IMR-90 (cell line): ENCODE measurements at regions of chr2 and their contacts with region 1.

Region 1: DNA sequence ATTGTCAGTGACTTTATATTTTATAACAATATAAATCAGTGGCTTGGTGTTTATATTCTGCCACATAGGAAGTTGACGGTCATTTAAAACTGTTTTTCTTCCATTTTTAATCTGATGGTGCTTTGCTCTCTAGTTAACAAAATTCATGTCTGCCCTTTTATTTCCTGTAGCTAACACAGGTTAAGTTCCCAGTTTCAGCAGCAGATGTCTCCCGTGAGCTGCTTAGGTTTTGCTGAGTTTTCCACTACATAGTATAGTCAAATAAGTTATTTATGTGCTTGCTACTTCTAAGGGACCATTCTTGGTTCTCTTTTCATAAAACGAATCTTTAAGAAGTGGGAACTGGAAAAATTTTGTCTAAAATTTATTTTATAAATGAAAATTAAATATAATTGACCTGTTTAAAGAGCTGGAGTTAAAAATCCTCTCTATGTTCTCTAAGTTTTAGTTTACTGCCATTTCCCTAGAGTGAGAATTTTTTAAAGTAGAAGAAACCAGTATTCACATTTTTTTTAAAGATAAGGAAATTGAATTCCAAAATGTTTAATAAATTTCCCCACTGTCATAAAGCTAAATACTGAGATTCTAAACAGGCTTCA is 20.6 kb downstream of the HTR2B start:
- DNase-seq: peak; percentile 75
- ATAC-seq: peak; percentile 94
- H3K4me3 ChIP-seq: no peak overlapping the region
- H3K27ac ChIP-seq: peak overlapping the region; percentile 15; the same call in 1 of the 2 replicates
- H3K4me1 ChIP-seq: peaks cover 7% of the 10 kb centered on the region
- H3K27me3 ChIP-seq: no peaks in the 10 kb centered on the region
- CTCF ChIP-seq: peak; percentile 89
- POLR2A ChIP-seq: no peak
- RAD21 ChIP-seq: peak; percentile 90

Region 2: GRCh38 chr2:231191896-231192872 is 88.0 kb after region 1 on chr2:
- CTCF ChIA-PET with region 1: interaction called, 25 read pairs
- POLR2A ChIA-PET with region 1: interaction called, 3 read pairs
- dilution Hi-C with region 1: no loop called
- in situ Hi-C with region 1: no loop called
- intact Hi-C with region 1: loop called (anchors 1 kb)
- DNase-seq: peak; percentile 83
- ATAC-seq: peak; percentile 98
- H3K4me3 ChIP-seq: no peak overlapping the region
- H3K27ac ChIP-seq: peak overlapping the region; percentile 71; the same call in 1 of the 2 replicates
- H3K4me1 ChIP-seq: peaks cover 14% of the 10 kb centered on the region; the same call in 1 of the 2 replicates
- H3K27me3 ChIP-seq: no peaks in the 10 kb centered on the region
- CTCF ChIP-seq: peak; percentile 82
- POLR2A ChIP-seq: no peak
- RAD21 ChIP-seq: peak; percentile 84

Region 3: DNA sequence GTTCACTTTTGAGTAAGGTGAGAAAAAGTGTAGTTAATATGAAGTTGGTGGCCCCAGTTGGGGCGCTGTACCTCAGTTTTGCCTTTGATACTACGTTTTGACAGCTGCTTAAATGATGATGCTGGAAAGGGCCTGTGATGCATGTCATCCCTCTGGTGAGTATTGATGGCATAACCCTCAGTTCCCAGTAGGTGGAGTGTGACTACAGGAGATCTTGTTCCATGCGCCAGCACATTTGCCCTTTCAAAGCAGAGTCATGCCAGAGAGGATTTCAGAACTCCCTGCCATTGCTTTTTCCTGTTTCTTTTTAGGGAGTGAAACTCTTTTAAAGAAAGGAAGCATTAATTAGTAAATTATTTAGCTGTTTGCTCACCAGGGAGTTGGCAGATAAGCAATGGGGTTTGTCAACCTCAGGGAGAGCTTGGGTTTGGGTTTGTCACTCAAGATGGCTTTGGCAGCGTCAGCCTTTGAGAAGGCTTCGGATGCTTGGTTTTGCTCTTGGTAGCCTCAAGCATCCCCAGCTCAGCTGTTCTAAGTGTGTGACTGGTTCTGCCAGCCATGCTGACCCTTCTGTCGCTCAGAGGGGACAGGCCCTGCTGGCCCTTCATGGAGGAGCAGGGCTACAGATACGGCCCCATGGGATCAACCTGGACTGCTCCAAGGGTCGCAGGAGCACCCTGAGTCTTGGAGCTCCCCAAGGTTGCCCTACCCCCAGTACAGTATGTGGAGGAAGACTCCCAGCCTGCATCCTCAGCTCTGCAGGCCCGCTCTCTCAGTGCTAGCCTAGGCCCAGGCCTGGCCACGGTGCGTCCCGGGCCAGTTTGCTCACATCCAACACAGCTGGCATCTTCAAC is 123.3 kb after region 1 on chr2:
- CTCF ChIA-PET with region 1: no interaction called
- POLR2A ChIA-PET with region 1: no interaction called
- dilution Hi-C with region 1: no loop called
- in situ Hi-C with region 1: no loop called
- intact Hi-C with region 1: loop called (anchors 1 kb)
- DNase-seq: peak; percentile 79
- ATAC-seq: peak; percentile 75
- H3K4me3 ChIP-seq: no peak overlapping the region
- H3K27ac ChIP-seq: peak overlapping the region; percentile 36; the same call in 1 of the 2 replicates
- H3K4me1 ChIP-seq: peaks cover 20% of the 10 kb centered on the region
- H3K27me3 ChIP-seq: no peaks in the 10 kb centered on the region
- CTCF ChIP-seq: peak; percentile 80
- POLR2A ChIP-seq: 0 out of 2 replicates have a peak, but pooled peaks have one; percentile 29
- RAD21 ChIP-seq: peak; percentile 87

Region 4: GRCh38 chr2:231531466-231532217 is 427.4 kb after region 1 on chr2:
- CTCF ChIA-PET with region 1: no interaction called
- POLR2A ChIA-PET with region 1: no interaction called
- dilution Hi-C with region 1: no loop called
- in situ Hi-C with region 1: no loop called
- intact Hi-C with region 1: no loop called
- DNase-seq: peak; percentile 41
- ATAC-seq: no peak
- H3K4me3 ChIP-seq: no peak overlapping the region
- H3K27ac ChIP-seq: no peak overlapping the region
- H3K4me1 ChIP-seq: no peaks in the 10 kb centered on the region
- H3K27me3 ChIP-seq: peaks cover 48% of the 10 kb centered on the region
- CTCF ChIP-seq: no peak
- POLR2A ChIP-seq: no peak
- RAD21 ChIP-seq: no peak